ENCODE measurements at regions of chr3 and their contacts with region 1.

Region 1: DNA sequence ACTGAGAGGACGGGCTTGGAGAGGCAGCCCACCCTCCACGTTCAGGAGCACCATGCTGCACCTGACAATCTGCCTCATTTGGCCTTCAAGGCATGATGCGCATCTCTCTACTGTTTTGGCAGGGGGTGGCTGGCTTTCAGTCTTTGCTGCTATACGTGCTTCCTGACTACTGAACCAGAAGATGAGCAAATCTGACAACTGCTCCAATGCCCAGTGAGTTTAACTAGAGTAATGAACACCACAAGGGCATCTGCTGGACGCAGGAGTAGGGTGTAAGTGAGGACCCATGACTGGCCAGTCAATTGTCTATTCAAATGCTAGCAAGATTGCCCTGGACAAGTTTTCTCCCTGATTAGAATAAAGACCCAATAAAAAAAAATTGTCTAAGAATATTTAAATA is 335.7 kb downstream of the MAGI1 start:
- DNase-seq: no peak
- H3K4me3 ChIP-seq: no peak overlapping the region
- H3K27ac ChIP-seq: no peak overlapping the region
- H3K4me1 ChIP-seq: no peaks in the 10 kb centered on the region
- H3K27me3 ChIP-seq: no peaks in the 10 kb centered on the region
- CTCF ChIP-seq: no peak

Region 2: DNA sequence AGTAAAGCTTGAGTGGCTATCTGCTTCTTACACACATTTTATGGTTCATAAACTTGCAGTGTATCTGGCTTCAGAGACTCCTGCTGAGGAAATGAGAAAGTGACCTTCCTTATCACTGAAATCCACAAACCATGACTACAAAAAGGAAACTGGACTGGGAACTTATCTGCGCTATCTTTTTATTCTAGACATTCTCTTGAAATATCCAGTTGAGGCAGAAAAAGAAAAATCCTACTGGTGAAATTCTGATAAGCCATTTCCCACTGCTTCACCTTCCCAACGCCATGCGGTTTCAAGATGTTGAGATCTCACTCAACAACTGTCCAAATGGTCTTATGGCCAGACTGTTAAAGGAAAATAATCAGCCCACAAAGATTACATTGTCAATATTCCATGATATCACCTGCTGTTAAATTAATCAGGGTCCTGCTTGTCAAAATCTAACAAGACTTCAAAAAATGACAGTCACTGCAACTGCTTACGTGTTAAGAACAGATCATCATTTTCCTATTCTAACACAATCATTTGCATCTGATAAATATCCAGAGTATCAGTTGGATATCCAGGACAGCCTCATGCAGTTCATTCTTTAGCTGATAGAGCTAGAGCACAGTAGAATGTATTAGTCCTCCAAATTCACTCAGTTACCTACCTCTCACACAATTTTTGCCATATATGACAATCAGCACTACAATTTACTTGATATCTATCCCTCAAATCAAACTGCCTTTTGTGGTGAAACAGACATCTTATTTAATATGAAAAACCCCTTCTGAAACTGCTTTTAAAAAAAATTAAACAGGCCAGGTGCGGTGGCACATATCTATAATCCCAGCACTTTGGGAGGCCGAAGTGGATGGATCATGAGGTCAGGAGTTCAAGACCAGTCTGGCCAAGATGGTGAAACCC is 202.4 kb before region 1 on chr3:
- CTCF ChIA-PET with region 1: no interaction called
- POLR2A ChIA-PET with region 1: interaction called, 10 read pairs
- intact Hi-C with region 1: no loop called
- DNase-seq: no peak
- H3K4me3 ChIP-seq: no peak overlapping the region
- H3K27ac ChIP-seq: no peak overlapping the region
- H3K4me1 ChIP-seq: peaks cover 12% of the 10 kb centered on the region
- H3K27me3 ChIP-seq: no peaks in the 10 kb centered on the region
- CTCF ChIP-seq: no peak

Region 3: DNA sequence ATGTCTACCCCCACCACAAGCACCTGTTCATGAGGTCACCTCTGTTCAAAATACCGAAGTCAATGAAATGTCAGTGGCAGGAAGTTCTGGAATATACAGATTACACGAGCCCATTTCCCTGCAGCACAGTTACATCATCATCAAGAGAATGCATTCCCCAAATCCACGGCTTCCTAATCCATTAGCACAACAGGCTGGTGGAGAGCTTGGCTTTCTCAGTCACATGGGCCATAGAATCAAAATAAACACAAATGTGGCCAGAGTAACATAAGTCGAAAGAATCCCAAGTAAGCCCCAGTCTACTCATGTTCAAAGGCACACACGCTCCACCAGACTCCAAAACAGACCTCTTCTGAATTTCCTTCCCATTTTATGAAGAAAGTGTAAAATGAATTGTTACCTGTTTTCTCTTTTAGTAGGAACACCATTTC is 83.6 kb before region 1 on chr3:
- CTCF ChIA-PET with region 1: no interaction called
- POLR2A ChIA-PET with region 1: no interaction called
- intact Hi-C with region 1: no loop called
- DNase-seq: no peak
- H3K4me3 ChIP-seq: no peak overlapping the region
- H3K27ac ChIP-seq: no peak overlapping the region
- H3K4me1 ChIP-seq: no peaks in the 10 kb centered on the region
- H3K27me3 ChIP-seq: no peaks in the 10 kb centered on the region
- CTCF ChIP-seq: no peak

Region 4: GRCh38 chr3:65871305-65872141 is 168.5 kb after region 1 on chr3:
- CTCF ChIA-PET with region 1: no interaction called
- POLR2A ChIA-PET with region 1: no interaction called
- intact Hi-C with region 1: no loop called
- DNase-seq: no peak
- H3K4me3 ChIP-seq: no peak overlapping the region
- H3K27ac ChIP-seq: no peak overlapping the region
- H3K4me1 ChIP-seq: no peaks in the 10 kb centered on the region
- H3K27me3 ChIP-seq: no peaks in the 10 kb centered on the region
- CTCF ChIP-seq: no peak

Measured in PC-9 (cell line).